ENCODE measurements at regions of chr10 and their contacts with region 1.

Region 1: GRCh38 chr10:103102195-103102594 is 90.9 kb downstream of the NT5C2 start:
- DNase-seq: no peak
- H3K4me3 ChIP-seq: no peak overlapping the region
- H3K27ac ChIP-seq: no peak overlapping the region
- H3K4me1 ChIP-seq: peaks cover 3 to 22% (median 11%) of the 10 kb centered on the region in 4 donors
- H3K27me3 ChIP-seq: no peaks in the 10 kb centered on the region
- CTCF ChIP-seq: no peak
- EP300 ChIP-seq: no peak
- POLR2A ChIP-seq: no peak

Region 2: DNA sequence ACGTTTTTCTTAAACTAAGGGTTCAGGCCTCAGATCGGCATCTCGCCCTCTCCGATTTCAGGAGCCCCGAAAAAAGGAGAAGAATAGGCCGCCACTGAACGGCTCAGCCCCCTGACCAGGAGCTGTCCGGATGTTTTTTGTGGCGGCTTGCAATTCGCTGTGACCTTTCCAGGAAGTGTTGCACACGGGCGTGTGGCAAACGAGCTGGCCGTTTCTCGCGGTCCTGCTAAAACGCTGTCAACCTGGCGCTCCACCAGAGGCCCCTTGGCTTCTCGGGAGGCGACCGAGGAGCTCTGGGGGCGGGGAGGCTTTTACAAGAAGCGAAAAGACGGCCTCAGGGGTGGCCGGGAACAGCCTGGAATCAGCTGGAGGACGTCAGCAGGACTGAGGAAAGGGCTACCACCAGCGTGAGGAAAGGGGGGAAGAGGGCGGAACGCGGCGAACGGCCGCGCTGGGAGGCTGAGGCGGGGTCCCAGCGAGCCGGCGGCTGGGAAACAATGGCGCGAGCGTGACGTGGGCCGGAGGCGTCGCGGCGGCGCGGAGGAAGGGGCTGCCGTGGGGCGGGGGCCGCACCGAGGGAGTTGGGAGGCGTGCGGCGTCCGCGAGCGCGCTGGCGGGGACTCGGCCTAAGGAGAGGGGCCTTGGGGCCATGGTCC is 90.4 kb after region 1 on chr10:
- intact Hi-C with region 1: loop called (anchors 5 kb)
- DNase-seq: peak; percentile 94
- H3K4me3 ChIP-seq: peak overlapping the region; percentile 98 to 100 (median 99)
- H3K27ac ChIP-seq: peak overlapping the region; percentile 98 to 100 (median 98)
- H3K4me1 ChIP-seq: peaks cover 52 to 63% (median 58%) of the 10 kb centered on the region in 4 donors
- H3K27me3 ChIP-seq: no peaks in the 10 kb centered on the region
- CTCF ChIP-seq: no peak
- EP300 ChIP-seq: no peak
- POLR2A ChIP-seq: no peak

Region 3: GRCh38 chr10:103232772-103233488 is 130.7 kb after region 1 on chr10:
- intact Hi-C with region 1: no loop called
- DNase-seq: no peak
- H3K4me3 ChIP-seq: no peak overlapping the region
- H3K27ac ChIP-seq: no peak overlapping the region
- H3K4me1 ChIP-seq: peaks cover 35 to 51% (median 45%) of the 10 kb centered on the region in 4 donors
- H3K27me3 ChIP-seq: no peaks in the 10 kb centered on the region
- CTCF ChIP-seq: no peak
- EP300 ChIP-seq: no peak
- POLR2A ChIP-seq: no peak